K562 (cell line): ENCODE measurements at regions of chr5 and their contacts with region 1.

Region 1: GRCh38 chr5:128213340-128213739 is 129.8 kb downstream of the SLC12A2 start:
- DNase-seq: peak; percentile 18 to 65 (median 24)
- ATAC-seq: peak; percentile 83
- H3K4me3 ChIP-seq: no peak overlapping the region
- H3K27ac ChIP-seq: no peak overlapping the region
- H3K4me1 ChIP-seq: no peaks in the 10 kb centered on the region
- H3K27me3 ChIP-seq: peaks cover 0 to 6% of the 10 kb centered on the region in 2 experiments; a peak in 1 of 5 replicates
- CTCF ChIP-seq: peak; percentile 57 to 79 (median 70); a peak in 5 of 6 replicates
- EP300 ChIP-seq: no peak
- POLR2A ChIP-seq: no peak
- RAD21 ChIP-seq: peak; percentile 81 to 85

Region 2: GRCh38 chr5:127684726-127685467 is 528.4 kb before region 1 on chr5:
- CTCF ChIA-PET with region 1: no interaction called
- POLR2A ChIA-PET with region 1: no interaction called
- in situ Hi-C with region 1: no loop called
- intact Hi-C with region 1: no loop called
- DNase-seq: no peak
- ATAC-seq: no peak
- H3K4me3 ChIP-seq: no peak overlapping the region
- H3K27ac ChIP-seq: no peak overlapping the region
- H3K4me1 ChIP-seq: no peaks in the 10 kb centered on the region
- H3K27me3 ChIP-seq: no peaks in the 10 kb centered on the region
- CTCF ChIP-seq: no peak
- EP300 ChIP-seq: no peak
- POLR2A ChIP-seq: no peak
- RAD21 ChIP-seq: no peak

Region 3: DNA sequence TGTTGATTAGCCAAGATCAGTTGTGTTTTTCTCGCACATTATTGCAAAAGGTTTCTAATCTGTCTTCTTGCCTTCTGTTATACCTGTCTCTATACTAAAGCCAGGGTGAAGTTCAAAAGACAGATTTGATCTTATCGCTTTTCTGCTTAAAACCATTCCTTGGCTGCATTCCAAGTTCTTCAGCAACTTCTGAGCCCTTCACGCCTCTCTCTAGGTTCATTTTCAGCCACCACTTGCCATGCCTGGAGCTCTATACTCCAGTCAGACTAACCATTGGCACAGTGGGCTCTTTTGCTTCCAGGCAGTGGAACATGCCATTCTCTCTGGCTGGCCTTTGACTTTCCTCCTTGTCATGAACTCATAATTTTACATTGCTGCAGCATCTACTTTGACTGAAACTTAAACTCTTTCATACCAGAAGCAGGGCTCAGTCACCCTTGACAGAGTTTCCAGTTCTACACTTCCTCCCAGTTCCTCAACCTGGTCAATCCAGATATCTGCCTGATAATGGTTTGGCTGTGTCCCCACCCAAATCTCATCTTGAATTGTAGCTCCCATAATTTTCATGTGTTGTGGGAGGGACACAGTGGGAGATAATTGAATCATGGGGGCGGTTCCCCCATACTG is 15.3 kb before region 1 on chr5:
- CTCF ChIA-PET with region 1: no interaction called
- POLR2A ChIA-PET with region 1: no interaction called
- in situ Hi-C with region 1: no loop called
- intact Hi-C with region 1: no loop called
- DNase-seq: peak in 2 of 4 experiments; percentile 20
- ATAC-seq: no peak
- H3K4me3 ChIP-seq: no peak overlapping the region
- H3K27ac ChIP-seq: no peak overlapping the region
- H3K4me1 ChIP-seq: peaks cover 6 to 14% of the 10 kb centered on the region in 2 experiments
- H3K27me3 ChIP-seq: no peaks in the 10 kb centered on the region
- CTCF ChIP-seq: no peak
- EP300 ChIP-seq: no peak
- POLR2A ChIP-seq: no peak
- RAD21 ChIP-seq: no peak

Region 4: GRCh38 chr5:128228008-128228407 is 14.7 kb after region 1 on chr5:
- CTCF ChIA-PET with region 1: no interaction called
- POLR2A ChIA-PET with region 1: no interaction called
- in situ Hi-C with region 1: no loop called
- intact Hi-C with region 1: no loop called
- DNase-seq: no peak
- ATAC-seq: no peak
- H3K4me3 ChIP-seq: no peak overlapping the region
- H3K27ac ChIP-seq: no peak overlapping the region
- H3K4me1 ChIP-seq: no peaks in the 10 kb centered on the region
- H3K27me3 ChIP-seq: no peaks in the 10 kb centered on the region
- CTCF ChIP-seq: no peak
- EP300 ChIP-seq: no peak
- POLR2A ChIP-seq: no peak
- RAD21 ChIP-seq: no peak

Region 5: GRCh38 chr5:128674825-128675446 is 461.6 kb after region 1 on chr5:
- CTCF ChIA-PET with region 1: no interaction called
- POLR2A ChIA-PET with region 1: no interaction called
- in situ Hi-C with region 1: no loop called
- intact Hi-C with region 1: loop called (anchors 1 kb)
- DNase-seq: peak; percentile 28 to 48 (median 42)
- ATAC-seq: peak; percentile 73
- H3K4me3 ChIP-seq: no peak overlapping the region
- H3K27ac ChIP-seq: no peak overlapping the region
- H3K4me1 ChIP-seq: no peaks in the 10 kb centered on the region
- H3K27me3 ChIP-seq: no peaks in the 10 kb centered on the region
- CTCF ChIP-seq: peak; percentile 30 to 46 (median 46); a peak in 5 of 6 replicates
- EP300 ChIP-seq: no peak
- POLR2A ChIP-seq: no peak
- RAD21 ChIP-seq: peak; percentile 17 to 45; a peak in 2 of 4 replicates

Region 6: GRCh38 chr5:128844354-128844923 is 631.1 kb after region 1 on chr5:
- CTCF ChIA-PET with region 1: no interaction called
- POLR2A ChIA-PET with region 1: no interaction called
- in situ Hi-C with region 1: no loop called
- intact Hi-C with region 1: loop called (anchors 1 kb)
- DNase-seq: no peak
- ATAC-seq: no peak
- H3K4me3 ChIP-seq: no peak overlapping the region
- H3K27ac ChIP-seq: no peak overlapping the region
- H3K4me1 ChIP-seq: no peaks in the 10 kb centered on the region
- H3K27me3 ChIP-seq: no peaks in the 10 kb centered on the region
- CTCF ChIP-seq: no peak; a peak in 1 of 6 replicates
- EP300 ChIP-seq: no peak
- POLR2A ChIP-seq: no peak
- RAD21 ChIP-seq: peak in 1 of 2 experiments; percentile 37; a peak in 2 of 4 replicates

Region 7: DNA sequence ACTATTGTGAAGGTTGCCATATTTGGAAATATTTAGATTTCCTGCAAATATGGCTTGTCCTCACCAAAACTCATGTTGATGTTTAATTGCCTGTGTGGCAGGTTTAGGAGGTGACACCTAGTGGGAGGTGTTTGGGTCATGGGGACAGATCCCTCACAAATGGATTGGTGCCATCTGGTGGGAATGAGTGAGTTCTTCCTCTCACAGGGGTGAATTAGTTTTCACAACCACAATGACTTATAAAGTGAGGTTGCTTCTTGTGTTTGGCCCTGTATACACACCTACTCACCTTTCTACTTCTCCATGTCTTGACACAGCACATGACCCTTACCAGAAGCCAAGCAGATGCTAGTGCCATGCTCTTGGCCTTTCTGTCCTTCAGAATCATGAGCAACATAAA is 922.3 kb after region 1 on chr5:
- CTCF ChIA-PET with region 1: no interaction called
- POLR2A ChIA-PET with region 1: no interaction called
- in situ Hi-C with region 1: loop called (anchors 25 kb)
- intact Hi-C with region 1: loop called (anchors 5 kb)
- DNase-seq: peak in 2 of 4 experiments; percentile 16 to 53
- ATAC-seq: peak; percentile 94
- H3K4me3 ChIP-seq: no peak overlapping the region
- H3K27ac ChIP-seq: no peak overlapping the region
- H3K4me1 ChIP-seq: no peaks in the 10 kb centered on the region
- H3K27me3 ChIP-seq: no peaks in the 10 kb centered on the region
- CTCF ChIP-seq: peak; percentile 45 to 60 (median 52); a peak in 5 of 6 replicates
- EP300 ChIP-seq: no peak
- POLR2A ChIP-seq: no peak
- RAD21 ChIP-seq: peak; percentile 66 to 86